Activated B cell treated with CpG ODN at 0.5 μM for 24 hours (primary cell): ENCODE measurements at regions of chr4 and their contacts with region 1.

Region 1: GRCh38 chr4:105471566-105472176 is 2.2 kb downstream of the PPA2 start:
- DNase-seq: no peak
- ATAC-seq: peak; percentile 35
- H3K4me3 Mint-ChIP-seq: peak overlapping the region; percentile 59
- H3K27ac Mint-ChIP-seq: peak overlapping the region; percentile 13
- H3K4me1 Mint-ChIP-seq: peaks cover 37% of the 10 kb centered on the region
- H3K27me3 Mint-ChIP-seq: no peaks in the 10 kb centered on the region
- CTCF ChIP-seq: peak; percentile 38

Region 2: GRCh38 chr4:104743215-104743653 is 728.4 kb before region 1 on chr4:
- CTCF ChIA-PET with region 1: no interaction called
- POLR2A ChIA-PET with region 1: no interaction called
- intact Hi-C with region 1: loop called (anchors 5 kb)
- DNase-seq: no peak
- ATAC-seq: peak; percentile 87
- H3K4me3 Mint-ChIP-seq: peak overlapping the region; percentile 42
- H3K27ac Mint-ChIP-seq: peak overlapping the region; percentile 83
- H3K4me1 Mint-ChIP-seq: peaks cover 22% of the 10 kb centered on the region
- H3K27me3 Mint-ChIP-seq: peaks cover 2% of the 10 kb centered on the region
- CTCF ChIP-seq: no peak

Region 3: DNA sequence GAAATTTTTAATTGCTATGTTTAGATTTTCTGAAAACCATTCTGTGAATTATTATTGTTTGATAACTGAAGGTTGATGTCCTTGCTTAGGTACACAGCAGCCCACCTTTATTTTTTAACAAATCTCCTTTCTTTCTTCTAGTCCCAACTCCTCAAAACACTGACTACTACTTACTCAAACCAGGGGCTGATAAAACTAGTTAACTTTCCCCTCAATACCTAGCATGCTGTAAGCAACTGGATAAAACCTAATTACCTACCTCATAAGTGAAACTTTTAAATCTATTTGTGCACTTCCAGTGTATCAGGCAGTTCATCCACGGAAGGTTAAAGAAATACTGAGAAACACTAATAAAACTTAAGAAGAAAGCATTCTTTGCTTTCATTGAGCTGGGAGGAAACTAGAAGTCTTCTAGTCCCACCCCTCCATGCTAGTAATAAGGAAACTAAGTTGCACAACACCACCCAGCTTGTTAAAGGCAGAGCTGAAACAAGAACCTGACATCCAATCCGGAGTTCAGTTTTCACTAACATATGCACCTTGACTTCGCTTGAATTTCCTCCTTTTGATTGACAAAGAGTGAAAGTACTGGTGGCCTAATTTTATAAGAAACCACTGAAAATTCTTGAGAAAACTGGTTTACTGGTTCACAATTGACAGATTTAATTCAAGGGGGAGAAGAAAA is 505.2 kb before region 1 on chr4:
- CTCF ChIA-PET with region 1: no interaction called
- POLR2A ChIA-PET with region 1: interaction called, 5 read pairs
- intact Hi-C with region 1: loop called (anchors 10 kb)
- DNase-seq: no peak
- ATAC-seq: peak; percentile 97
- H3K4me3 Mint-ChIP-seq: peak overlapping the region; percentile 70
- H3K27ac Mint-ChIP-seq: peak overlapping the region; percentile 86
- H3K4me1 Mint-ChIP-seq: peaks cover 23% of the 10 kb centered on the region
- H3K27me3 Mint-ChIP-seq: peaks cover 4% of the 10 kb centered on the region
- CTCF ChIP-seq: no peak

Region 4: DNA sequence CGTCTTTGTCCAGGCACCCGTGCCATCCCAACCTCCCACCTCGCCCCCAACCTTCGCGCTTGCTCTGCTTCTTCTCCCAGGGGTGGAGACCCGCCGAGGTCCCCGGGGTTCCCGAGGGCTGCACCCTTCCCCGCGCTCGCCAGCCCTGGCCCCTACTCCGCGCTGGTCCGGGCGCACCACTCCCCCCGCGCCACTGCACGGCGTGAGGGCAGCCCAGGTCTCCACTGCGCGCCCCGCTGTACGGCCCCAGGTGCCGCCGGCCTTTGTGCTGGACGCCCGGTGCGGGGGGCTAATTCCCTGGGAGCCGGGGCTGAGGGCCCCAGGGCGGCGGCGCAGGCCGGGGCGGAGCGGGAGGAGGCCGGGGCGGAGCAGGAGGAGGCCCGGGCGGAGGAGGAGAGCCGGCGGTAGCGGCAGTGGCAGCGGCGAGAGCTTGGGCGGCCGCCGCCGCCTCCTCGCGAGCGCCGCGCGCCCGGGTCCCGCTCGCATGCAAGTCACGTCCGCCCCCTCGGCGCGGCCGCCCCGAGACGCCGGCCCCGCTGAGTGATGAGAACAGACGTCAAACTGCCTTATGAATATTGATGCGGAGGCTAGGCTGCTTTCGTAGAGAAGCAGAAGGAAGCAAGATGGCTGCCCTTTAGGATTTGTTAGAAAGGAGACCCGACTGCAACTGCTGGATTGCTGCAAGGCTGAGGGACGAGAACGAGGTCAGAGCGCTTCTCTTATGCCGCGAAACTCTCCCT is 325.2 kb before region 1 on chr4 and contains the start of gene TET2:
- CTCF ChIA-PET with region 1: interaction called, 33 read pairs
- POLR2A ChIA-PET with region 1: interaction called, 34 read pairs
- intact Hi-C with region 1: loop called (anchors 1 kb)
- DNase-seq: peak; percentile 72
- ATAC-seq: peak; percentile 80
- H3K4me3 Mint-ChIP-seq: peak within 1 kb of the TSS; percentile 99
- H3K27ac Mint-ChIP-seq: peak within 1 kb of the TSS; percentile 98
- H3K4me1 Mint-ChIP-seq: peaks cover 51% of the 10 kb centered on the region
- H3K27me3 Mint-ChIP-seq: no peaks in the 10 kb centered on the region
- CTCF ChIP-seq: no peak
- total RNA-seq, gene TET2: 39.7 and 51.2 TPM in 2 replicates

Region 5: GRCh38 chr4:105708530-105709391 is 237.1 kb after region 1 on chr4 and contains the starts of genes GSTCD and INTS12:
- CTCF ChIA-PET with region 1: interaction called, 6 read pairs
- POLR2A ChIA-PET with region 1: interaction called, 6 read pairs
- intact Hi-C with region 1: loop called (anchors 1 kb)
- DNase-seq: peak; percentile 83
- ATAC-seq: peak; percentile 95
- H3K4me3 Mint-ChIP-seq: peak within 1 kb of the TSS; percentile 99
- H3K27ac Mint-ChIP-seq: peak within 1 kb of the TSS; percentile 94
- H3K4me1 Mint-ChIP-seq: peaks cover 28% of the 10 kb centered on the region
- H3K27me3 Mint-ChIP-seq: no peaks in the 10 kb centered on the region
- CTCF ChIP-seq: no peak
- total RNA-seq, gene GSTCD: 11.3 and 12.3 TPM in 2 replicates
- total RNA-seq, gene INTS12: 18.6 and 20.6 TPM in 2 replicates